ENCODE measurements at regions of chr15 and their contacts with region 1.

Region 1: DNA sequence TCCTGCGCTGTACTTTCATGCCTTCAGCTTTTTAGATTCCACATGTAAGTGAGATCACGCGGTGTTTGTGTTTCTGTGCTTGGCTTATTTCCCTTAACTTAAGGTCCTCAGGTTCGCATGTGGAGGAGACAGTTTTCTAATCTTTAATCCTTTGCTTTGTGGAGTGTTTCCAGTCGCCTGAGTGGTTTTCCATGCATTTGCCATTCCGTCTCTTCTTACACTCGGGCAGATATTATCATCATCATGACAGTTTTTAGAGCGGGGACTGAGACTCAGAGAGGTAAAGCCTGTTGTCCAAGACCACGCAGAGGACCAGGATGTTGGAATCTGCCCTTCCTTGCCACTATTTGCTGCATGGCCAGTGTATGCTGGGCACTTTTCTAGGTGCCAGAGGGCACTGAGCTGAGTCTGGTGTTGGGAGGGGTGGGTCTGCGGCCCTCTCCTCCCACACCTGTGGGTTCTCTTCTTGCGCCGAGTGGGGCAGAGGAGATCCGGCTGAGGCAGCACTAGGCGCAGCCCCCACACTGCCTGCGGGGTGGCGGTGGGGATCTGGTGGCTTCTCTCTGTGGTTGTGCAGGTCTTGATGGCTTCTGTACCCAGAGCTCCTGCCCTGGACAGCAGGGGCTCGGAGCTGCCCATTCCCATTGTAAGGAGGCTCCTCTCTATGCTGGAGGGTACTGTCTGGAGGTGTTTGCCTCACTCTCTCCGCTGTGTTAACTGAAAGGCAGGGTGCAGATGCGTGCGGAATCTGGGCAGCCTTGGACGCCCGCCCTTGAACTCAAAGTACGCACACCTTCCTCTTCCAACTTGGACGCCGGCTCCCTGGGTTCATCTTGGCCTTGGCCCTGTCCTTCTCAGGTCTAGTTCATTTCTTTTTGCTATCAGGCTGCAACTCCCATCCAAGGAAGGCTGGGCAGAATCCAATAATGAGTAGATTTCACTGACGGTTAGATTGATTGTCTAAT is 156.0 kb upstream of the RGMA start:
- DNase-seq: no peak
- H3K4me3 ChIP-seq: no peak overlapping the region
- H3K27ac ChIP-seq: no peak overlapping the region
- H3K4me1 ChIP-seq: no peaks in the 10 kb centered on the region
- H3K27me3 ChIP-seq: no peaks in the 10 kb centered on the region
- CTCF ChIP-seq: no peak
- POLR2A ChIP-seq: no peak

Region 2: DNA sequence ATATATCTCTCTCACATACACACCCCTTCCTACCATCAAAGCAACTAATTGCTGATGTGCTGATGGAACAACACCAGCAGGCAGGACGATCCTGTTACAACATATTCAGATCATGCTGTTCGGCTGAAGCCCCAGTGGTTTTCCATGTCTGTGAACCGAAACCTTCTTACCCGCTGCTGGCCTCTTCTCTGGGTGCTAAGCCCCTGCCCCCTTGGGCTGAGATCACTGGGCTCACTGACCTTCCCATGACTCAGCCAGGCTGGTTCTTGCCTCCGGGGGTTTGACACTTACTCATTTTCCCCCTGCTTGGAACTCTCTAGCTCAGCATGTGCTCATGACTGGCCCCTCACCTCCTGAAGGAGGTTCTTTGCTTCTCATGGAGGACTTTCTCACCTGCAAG is 34.0 kb before region 1 on chr15:
- intact Hi-C with region 1: loop called (anchors 2 kb)
- DNase-seq: no peak
- H3K4me3 ChIP-seq: no peak overlapping the region
- H3K27ac ChIP-seq: no peak overlapping the region
- H3K4me1 ChIP-seq: no peaks in the 10 kb centered on the region
- H3K27me3 ChIP-seq: no peaks in the 10 kb centered on the region
- CTCF ChIP-seq: no peak
- POLR2A ChIP-seq: no peak

Measured in breast epithelium (tissue), 4 donors.